ENCODE measurements at regions of chr1 and their contacts with region 1.

Region 1: GRCh38 chr1:204726478-204726877 is 40.9 kb upstream of the LRRN2 start:
- DNase-seq: peak; percentile 90 to 96
- ATAC-seq: peak; percentile 87 to 90
- H3K4me3 ChIP-seq: 0 out of 3 replicates have a peak overlapping the region, but pooled peaks have one; percentile 6
- H3K27ac ChIP-seq: peak overlapping the region; percentile 45 to 82; a peak in 5 of 6 replicates
- H3K4me1 ChIP-seq: peaks cover 48% of the 10 kb centered on the region
- CTCF ChIP-seq: no peak
- EP300 ChIP-seq: no peak
- POLR2A ChIP-seq: no peak
- RAD21 ChIP-seq: no peak

Region 2: DNA sequence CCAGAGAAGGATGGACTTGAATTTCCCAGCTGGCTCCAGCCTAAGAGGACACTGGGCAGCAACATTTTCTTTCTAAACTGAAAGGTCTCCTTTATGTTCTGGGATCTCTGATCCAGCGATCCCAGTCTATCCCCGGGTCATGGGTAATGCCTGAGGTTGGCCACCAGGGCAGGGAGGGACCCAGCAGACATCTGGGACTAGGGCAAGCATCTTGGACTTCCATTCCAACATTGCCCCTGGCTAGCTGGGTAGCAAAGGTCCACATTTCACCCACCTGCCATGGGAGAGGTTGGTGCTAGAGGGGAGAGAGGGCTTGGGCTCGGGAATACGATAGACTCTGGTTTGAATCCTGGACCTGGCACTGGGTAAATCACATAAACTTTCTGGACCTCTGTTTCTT is 125.5 kb before region 1 on chr1:
- CTCF ChIA-PET with region 1: no interaction called
- POLR2A ChIA-PET with region 1: no interaction called
- DNase-seq: peak; percentile 23 to 66
- ATAC-seq: peak; percentile 89 to 93
- H3K4me3 ChIP-seq: no peak overlapping the region
- H3K27ac ChIP-seq: no peak overlapping the region
- H3K4me1 ChIP-seq: no peaks in the 10 kb centered on the region
- CTCF ChIP-seq: no peak
- EP300 ChIP-seq: no peak
- POLR2A ChIP-seq: no peak
- RAD21 ChIP-seq: 0 out of 5 replicates have a peak, but pooled peaks of 1 of the 2 experiments have one; percentile 9

Region 3: DNA sequence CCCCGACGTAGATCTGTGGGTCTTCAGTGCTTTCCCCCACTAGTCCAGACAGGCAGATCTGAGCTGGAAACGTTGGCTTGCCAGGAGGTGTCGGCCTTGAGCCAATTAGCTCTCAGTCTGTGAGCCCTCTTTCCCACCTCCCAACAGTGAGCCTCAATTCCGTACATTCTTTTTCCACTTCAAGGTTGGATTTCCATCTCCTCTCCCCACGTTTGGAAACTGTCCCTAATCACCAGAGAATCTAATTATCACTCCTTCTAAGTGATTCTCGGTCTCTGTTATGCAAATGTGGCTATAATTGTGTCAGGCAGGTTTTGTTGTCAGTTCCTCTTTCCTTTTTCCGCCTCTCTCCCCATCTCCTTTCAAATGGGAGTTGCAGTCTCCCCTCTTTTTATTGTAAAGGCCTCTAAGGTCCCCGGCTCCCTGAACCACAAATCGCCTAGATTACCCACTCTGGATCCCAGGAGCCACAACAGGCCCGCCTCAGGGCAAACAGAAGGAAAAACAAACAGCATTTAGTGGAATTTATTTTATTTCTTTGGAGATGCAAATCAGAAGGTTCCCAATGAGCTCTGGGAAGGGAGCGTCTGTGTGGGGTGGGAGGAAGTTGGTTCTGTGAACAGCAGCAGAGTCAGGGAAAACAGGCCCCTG is 11.5 kb before region 1 on chr1:
- CTCF ChIA-PET with region 1: interaction called, 11 read pairs
- POLR2A ChIA-PET with region 1: no interaction called
- DNase-seq: no peak
- ATAC-seq: peak in 1 of 2 experiments; percentile 49; a peak in 2 of 6 replicates
- H3K4me3 ChIP-seq: no peak overlapping the region
- H3K27ac ChIP-seq: no peak overlapping the region; a peak in 1 of 6 replicates
- H3K4me1 ChIP-seq: peaks cover 11% of the 10 kb centered on the region
- CTCF ChIP-seq: 0 out of 3 replicates have a peak, but pooled peaks have one; percentile 14
- EP300 ChIP-seq: no peak
- POLR2A ChIP-seq: no peak
- RAD21 ChIP-seq: peak in 1 of 2 experiments; percentile 41; a peak in 2 of 5 replicates

Region 4: GRCh38 chr1:204902671-204903070 is 176.2 kb after region 1 on chr1:
- CTCF ChIA-PET with region 1: no interaction called
- POLR2A ChIA-PET with region 1: no interaction called
- DNase-seq: no peak
- ATAC-seq: no peak
- H3K4me3 ChIP-seq: no peak overlapping the region
- H3K27ac ChIP-seq: no peak overlapping the region
- H3K4me1 ChIP-seq: no peaks in the 10 kb centered on the region
- CTCF ChIP-seq: no peak
- EP300 ChIP-seq: no peak
- POLR2A ChIP-seq: no peak
- RAD21 ChIP-seq: no peak

Measured in A549 (cell line).